HepG2 (cell line): ENCODE measurements at regions of chr6 and their contacts with region 1.

Region 1: DNA sequence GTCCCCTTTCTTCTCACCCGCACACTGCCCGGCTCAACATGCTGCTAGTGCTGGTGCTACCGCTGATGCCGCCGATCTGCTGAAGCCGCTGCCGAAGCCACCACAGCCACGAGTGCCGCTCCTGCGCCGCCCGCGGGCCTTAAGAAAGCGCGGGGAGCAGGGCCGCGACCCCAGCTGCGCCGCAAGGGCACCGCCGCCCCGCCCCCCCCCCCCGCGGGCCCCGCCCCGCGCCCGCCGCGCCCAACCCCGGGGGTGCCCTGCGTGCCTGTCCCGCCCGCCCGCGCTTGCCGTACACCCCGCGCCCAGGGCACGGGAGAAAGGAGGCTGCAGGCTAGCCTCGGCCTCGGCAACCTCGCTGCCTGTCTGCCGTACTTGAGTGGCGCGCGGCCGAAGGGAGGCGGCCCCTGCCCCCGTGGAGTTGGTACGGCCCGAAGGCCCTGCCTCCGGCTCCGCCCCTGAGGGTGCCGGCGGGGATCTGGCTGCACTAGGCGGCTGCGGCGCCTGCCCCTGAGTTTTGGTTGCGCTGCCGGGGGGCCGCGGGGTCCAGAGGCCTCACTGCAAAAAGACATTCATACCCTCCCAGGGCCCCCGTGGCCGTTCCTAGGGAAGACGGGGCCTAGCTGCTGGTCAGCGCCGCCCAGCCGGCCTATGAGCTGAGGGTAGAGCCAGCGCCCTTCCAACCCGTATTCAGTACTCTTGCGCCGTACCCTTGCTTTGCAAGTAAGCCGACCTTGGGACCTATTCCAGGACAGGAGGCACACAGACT is at the start of gene SOD2:
- DNase-seq: peak; percentile 89
- ATAC-seq: peak; percentile 82
- H3K4me3 ChIP-seq: peak within 1 kb of the TSS; percentile 75 to 97 (median 90)
- H3K27ac ChIP-seq: peak within 1 kb of the TSS; percentile 94
- H3K4me1 ChIP-seq: peaks cover 52% of the 10 kb centered on the region
- H3K27me3 ChIP-seq: no peaks in the 10 kb centered on the region; a peak in 1 of 5 replicates
- CTCF ChIP-seq: peak; percentile 25; the same call in 1 of the 2 replicates
- EP300 ChIP-seq: peak; percentile 23 to 37; a peak in 2 of 4 replicates
- POLR2A ChIP-seq: peak; percentile 94 to 96
- RAD21 ChIP-seq: peak; percentile 74
- total RNA-seq, gene SOD2: 304 and 480 TPM in 2 replicates

Region 2: DNA sequence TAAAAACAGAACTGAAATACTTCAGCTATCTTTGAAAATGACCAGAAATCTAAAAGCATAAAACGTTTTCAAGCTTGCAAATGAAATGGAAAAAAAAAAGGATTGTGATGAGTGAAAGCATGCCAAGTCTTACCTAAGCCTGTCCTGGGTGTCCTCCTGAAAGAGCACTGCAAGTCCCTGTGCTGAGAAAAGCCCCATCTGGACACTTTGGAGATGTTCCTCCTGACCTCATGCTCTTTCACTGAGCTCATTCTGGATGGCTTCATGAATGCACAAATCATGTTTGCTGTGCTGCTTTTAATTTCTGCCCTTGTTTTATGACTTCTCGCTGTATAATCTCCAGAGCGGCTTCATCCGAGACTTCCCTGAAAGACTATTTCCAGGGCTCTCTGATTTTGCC is 136.3 kb before region 1 on chr6:
- CTCF ChIA-PET with region 1: no interaction called
- POLR2A ChIA-PET with region 1: no interaction called
- in situ Hi-C with region 1: no loop called
- intact Hi-C with region 1: no loop called
- DNase-seq: no peak
- ATAC-seq: no peak
- H3K4me3 ChIP-seq: no peak overlapping the region
- H3K27ac ChIP-seq: no peak overlapping the region
- H3K4me1 ChIP-seq: no peaks in the 10 kb centered on the region
- H3K27me3 ChIP-seq: 0 out of 5 replicates have a peak, but pooled peaks cover 0 to 8% of the 10 kb centered on the region in 2 experiments
- CTCF ChIP-seq: no peak
- EP300 ChIP-seq: no peak
- POLR2A ChIP-seq: no peak
- RAD21 ChIP-seq: no peak

Region 3: DNA sequence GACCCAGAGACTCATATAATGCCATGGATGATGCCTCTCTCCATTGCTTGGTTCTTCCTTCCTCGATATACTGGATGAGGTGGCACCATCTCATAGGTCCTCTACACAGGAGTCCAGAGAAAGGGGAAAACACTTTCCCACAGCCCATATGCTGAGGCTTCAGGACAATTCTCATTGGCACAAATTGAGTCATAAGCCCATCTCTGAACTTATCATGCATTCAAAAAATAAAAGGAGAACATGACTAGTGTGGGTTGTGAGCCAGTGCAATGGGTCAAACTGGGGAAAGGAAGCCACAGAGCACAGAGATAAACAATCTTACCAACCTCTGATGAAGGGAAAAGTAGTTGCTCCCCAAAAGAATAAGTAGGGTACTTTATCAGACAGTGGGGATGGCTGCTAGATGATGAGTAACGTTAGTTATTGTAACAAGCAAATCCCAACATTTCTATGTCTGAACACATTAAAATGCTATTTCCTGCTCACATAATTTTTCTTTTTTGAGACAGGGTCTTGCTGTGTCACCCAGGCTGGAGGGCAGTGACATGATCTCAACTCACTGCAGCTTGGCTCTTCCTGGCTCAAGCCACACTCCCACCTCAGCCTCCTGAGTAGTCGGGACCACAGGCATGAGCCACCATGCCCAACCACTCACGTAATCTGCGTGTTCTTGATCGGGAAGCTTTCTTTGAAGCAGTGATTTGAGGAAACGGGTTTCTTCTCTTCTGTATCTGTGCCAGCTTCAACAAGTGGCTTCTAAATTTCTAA is 27.3 kb before region 1 on chr6:
- CTCF ChIA-PET with region 1: no interaction called
- POLR2A ChIA-PET with region 1: no interaction called
- in situ Hi-C with region 1: no loop called
- intact Hi-C with region 1: no loop called
- DNase-seq: no peak
- ATAC-seq: no peak
- H3K4me3 ChIP-seq: no peak overlapping the region
- H3K27ac ChIP-seq: no peak overlapping the region
- H3K4me1 ChIP-seq: no peaks in the 10 kb centered on the region
- H3K27me3 ChIP-seq: no peaks in the 10 kb centered on the region
- CTCF ChIP-seq: no peak
- EP300 ChIP-seq: no peak
- POLR2A ChIP-seq: no peak
- RAD21 ChIP-seq: no peak

Region 4: GRCh38 chr6:159682295-159682694 is 11.0 kb before region 1 on chr6:
- CTCF ChIA-PET with region 1: no interaction called
- POLR2A ChIA-PET with region 1: interaction called, 14 read pairs
- in situ Hi-C with region 1: no loop called
- intact Hi-C with region 1: no loop called
- DNase-seq: no peak
- ATAC-seq: no peak
- H3K4me3 ChIP-seq: no peak overlapping the region
- H3K27ac ChIP-seq: no peak overlapping the region
- H3K4me1 ChIP-seq: peaks cover 29% of the 10 kb centered on the region
- H3K27me3 ChIP-seq: no peaks in the 10 kb centered on the region
- CTCF ChIP-seq: no peak
- EP300 ChIP-seq: no peak
- POLR2A ChIP-seq: no peak
- RAD21 ChIP-seq: no peak

Region 5: DNA sequence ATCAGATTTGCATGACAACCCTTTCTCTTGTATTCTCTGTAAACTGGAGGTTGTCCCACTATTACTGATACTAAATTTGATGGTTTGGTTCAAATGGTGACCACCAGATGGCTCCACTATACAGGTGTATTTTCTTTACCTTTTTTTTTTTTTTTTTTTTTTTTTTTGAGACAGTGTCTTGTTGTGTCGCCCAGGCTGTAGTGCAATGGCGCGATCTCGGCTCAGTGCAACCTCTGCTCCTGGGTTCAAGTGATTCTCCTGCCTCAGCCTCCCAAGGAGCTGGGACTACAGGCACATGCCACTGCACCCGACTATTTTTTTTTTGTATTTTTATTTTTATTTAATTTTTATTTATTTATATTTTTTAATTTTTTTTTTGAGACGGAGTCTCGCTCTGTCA is 27.4 kb after region 1 on chr6:
- CTCF ChIA-PET with region 1: no interaction called
- POLR2A ChIA-PET with region 1: interaction called, 144 read pairs
- in situ Hi-C with region 1: loop called (anchors 5 kb)
- intact Hi-C with region 1: loop called (anchors 1 kb)
- DNase-seq: peak; percentile 82
- ATAC-seq: peak; percentile 52
- H3K4me3 ChIP-seq: no peak overlapping the region
- H3K27ac ChIP-seq: no peak overlapping the region
- H3K4me1 ChIP-seq: peaks cover 22% of the 10 kb centered on the region
- H3K27me3 ChIP-seq: no peaks in the 10 kb centered on the region
- CTCF ChIP-seq: peak; percentile 56
- EP300 ChIP-seq: no peak
- POLR2A ChIP-seq: no peak
- RAD21 ChIP-seq: no peak

Region 6: GRCh38 chr6:159726918-159727716 is 33.8 kb after region 1 on chr6 and contains the start of gene WTAP:
- CTCF ChIA-PET with region 1: no interaction called
- POLR2A ChIA-PET with region 1: interaction called, 144 read pairs
- in situ Hi-C with region 1: loop called (anchors 5 kb)
- intact Hi-C with region 1: loop called (anchors 1 kb)
- DNase-seq: peak; percentile 95
- ATAC-seq: peak; percentile 89
- H3K4me3 ChIP-seq: peak within 1 kb of the TSS; percentile 88 to 99 (median 97)
- H3K27ac ChIP-seq: peak within 1 kb of the TSS; percentile 99
- H3K4me1 ChIP-seq: peaks cover 61% of the 10 kb centered on the region
- H3K27me3 ChIP-seq: no peaks in the 10 kb centered on the region; a peak in 1 of 5 replicates
- CTCF ChIP-seq: peak; percentile 40
- EP300 ChIP-seq: peak; percentile 5 to 64; a peak in 2 of 4 replicates
- POLR2A ChIP-seq: peak; percentile 86 to 97
- RAD21 ChIP-seq: peak; percentile 62
- total RNA-seq, gene WTAP: 167 and 203 TPM in 2 replicates

Region 7: DNA sequence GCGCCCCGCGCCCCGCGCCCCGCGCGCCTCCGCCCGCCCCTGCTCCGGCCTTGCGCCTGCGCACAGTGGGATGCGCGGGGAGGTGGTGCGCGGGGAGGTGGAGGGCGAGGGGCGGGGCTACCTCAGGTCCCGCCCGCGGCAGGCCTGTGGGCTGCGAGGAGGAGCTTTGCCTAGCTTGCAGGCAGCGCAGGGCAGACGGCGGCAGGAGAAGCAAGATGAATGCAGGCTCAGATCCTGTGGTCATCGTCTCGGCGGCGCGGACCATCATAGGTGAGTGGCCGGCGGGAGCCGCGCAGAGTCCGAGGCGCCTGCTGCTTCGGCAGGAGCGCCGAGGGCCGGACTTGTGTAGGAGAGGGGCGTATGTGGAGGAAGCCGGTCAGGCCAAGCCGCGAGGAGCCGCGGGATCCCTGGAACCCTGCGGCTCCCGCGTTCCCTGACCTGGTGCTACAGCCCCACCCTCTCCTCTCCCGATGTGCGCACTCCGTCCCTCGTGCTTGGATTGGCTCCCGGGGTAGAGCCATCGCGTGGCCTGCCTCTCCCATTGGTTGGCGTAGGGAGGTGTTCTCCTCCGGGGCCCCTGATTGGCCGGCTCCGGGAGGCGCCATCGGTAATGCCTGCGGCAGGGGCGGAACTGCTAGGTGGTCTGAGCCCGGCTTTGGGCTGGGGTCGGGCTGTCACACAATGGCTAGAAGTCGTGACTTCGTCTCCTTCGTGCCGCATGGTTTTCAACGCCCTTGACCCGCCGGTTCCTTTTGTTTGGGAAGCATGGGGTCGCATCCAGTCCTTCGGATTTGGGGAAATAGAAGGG is 68.8 kb after region 1 on chr6 and contains the start of gene ACAT2:
- CTCF ChIA-PET with region 1: no interaction called
- POLR2A ChIA-PET with region 1: interaction called, 34 read pairs
- in situ Hi-C with region 1: loop called (anchors 5 kb)
- intact Hi-C with region 1: loop called (anchors 1 kb)
- DNase-seq: peak; percentile 97
- ATAC-seq: peak; percentile 94
- H3K4me3 ChIP-seq: peak within 1 kb of the TSS; percentile 83 to 97 (median 88)
- H3K27ac ChIP-seq: peak within 1 kb of the TSS; percentile 97
- H3K4me1 ChIP-seq: peaks cover 80% of the 10 kb centered on the region
- H3K27me3 ChIP-seq: no peaks in the 10 kb centered on the region; a peak in 1 of 5 replicates
- CTCF ChIP-seq: peak; percentile 12; the same call in 1 of the 2 replicates
- EP300 ChIP-seq: peak in 1 of 2 experiments; percentile 31; a peak in 2 of 4 replicates
- POLR2A ChIP-seq: peak; percentile 91 to 95
- RAD21 ChIP-seq: peak; percentile 60
- total RNA-seq, gene ACAT2: 534 and 775 TPM in 2 replicates

Region 8: DNA sequence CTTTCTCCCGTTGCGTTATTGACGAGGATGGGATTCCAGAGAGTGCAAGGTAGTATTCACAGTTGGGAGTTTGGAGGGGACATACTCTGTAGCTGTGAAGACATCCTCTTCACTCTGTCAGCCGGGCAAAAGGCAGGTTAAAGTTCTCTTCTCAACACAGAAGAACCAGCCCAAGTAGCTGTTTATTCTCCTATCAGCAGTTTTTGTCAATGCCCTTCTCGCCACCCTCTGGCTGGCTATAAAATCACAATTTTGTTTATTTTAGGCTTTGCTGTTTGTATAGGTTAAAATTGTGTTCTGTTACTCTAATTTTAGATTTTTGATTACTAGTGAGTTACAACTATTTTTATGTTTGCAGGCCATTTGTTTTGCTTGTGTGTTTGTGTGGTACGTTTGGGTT is 159.6 kb after region 1 on chr6:
- CTCF ChIA-PET with region 1: no interaction called
- POLR2A ChIA-PET with region 1: no interaction called
- in situ Hi-C with region 1: no loop called
- intact Hi-C with region 1: loop called (anchors 2 kb)
- DNase-seq: no peak
- ATAC-seq: peak; percentile 52; the same call in 2 of the 3 replicates
- H3K4me3 ChIP-seq: no peak overlapping the region
- H3K27ac ChIP-seq: no peak overlapping the region
- H3K4me1 ChIP-seq: 0 out of 2 replicates have a peak, but pooled peaks cover 4% of the 10 kb centered on the region
- H3K27me3 ChIP-seq: no peaks in the 10 kb centered on the region
- CTCF ChIP-seq: peak; percentile 45
- EP300 ChIP-seq: no peak
- POLR2A ChIP-seq: no peak
- RAD21 ChIP-seq: no peak

Region 9: DNA sequence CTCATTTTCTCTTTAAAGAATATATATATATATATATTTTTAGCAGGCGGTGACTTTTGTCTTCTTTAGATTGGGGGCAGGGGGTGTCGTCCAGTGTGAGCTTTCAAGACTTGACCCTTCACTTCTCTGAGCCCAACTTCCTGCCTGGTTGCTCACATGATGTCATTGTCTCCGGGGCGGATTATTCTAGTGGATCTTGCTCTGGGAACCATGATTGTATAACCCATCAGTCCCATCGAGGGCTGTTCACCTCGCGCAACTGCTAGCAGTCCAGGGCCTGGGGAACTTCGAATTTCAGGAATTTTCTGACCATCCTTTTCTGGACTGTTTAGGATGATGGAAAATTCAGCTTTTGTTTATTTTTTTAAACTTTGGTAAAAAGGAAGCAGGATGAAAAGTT is 276.6 kb after region 1 on chr6:
- CTCF ChIA-PET with region 1: no interaction called
- POLR2A ChIA-PET with region 1: interaction called, 3 read pairs
- in situ Hi-C with region 1: loop called (anchors 10 kb)
- intact Hi-C with region 1: no loop called
- DNase-seq: peak; percentile 92
- ATAC-seq: peak; percentile 70
- H3K4me3 ChIP-seq: peak overlapping the region; percentile 91 to 94 (median 92)
- H3K27ac ChIP-seq: peak overlapping the region; percentile 87
- H3K4me1 ChIP-seq: peaks cover 59% of the 10 kb centered on the region
- H3K27me3 ChIP-seq: peaks cover 0 to 5% of the 10 kb centered on the region in 2 experiments; a peak in 2 of 5 replicates
- CTCF ChIP-seq: no peak
- EP300 ChIP-seq: no peak
- POLR2A ChIP-seq: peak; percentile 61 to 76
- RAD21 ChIP-seq: no peak